GM12878 (cell line): ENCODE measurements at regions of chr16 and their contacts with region 1.

Region 1: GRCh38 chr16:19086322-19087199 is 19.1 kb downstream of the COQ7 start:
- DNase-seq: peak; percentile 20
- ATAC-seq: peak; percentile 100
- H3K4me3 ChIP-seq: peak overlapping the region; percentile 64; the same call in 1 of the 2 replicates
- H3K27ac ChIP-seq: no peak overlapping the region
- H3K4me1 ChIP-seq: peaks cover 3% of the 10 kb centered on the region; the same call in 1 of the 2 replicates
- H3K27me3 ChIP-seq: no peaks in the 10 kb centered on the region
- CTCF ChIP-seq: peak; percentile 95 to 96 (median 95)
- EP300 ChIP-seq: no peak
- POLR2A ChIP-seq: peak; percentile 43; the same call in 1 of the 2 replicates
- RAD21 ChIP-seq: peak; percentile 97

Region 2: DNA sequence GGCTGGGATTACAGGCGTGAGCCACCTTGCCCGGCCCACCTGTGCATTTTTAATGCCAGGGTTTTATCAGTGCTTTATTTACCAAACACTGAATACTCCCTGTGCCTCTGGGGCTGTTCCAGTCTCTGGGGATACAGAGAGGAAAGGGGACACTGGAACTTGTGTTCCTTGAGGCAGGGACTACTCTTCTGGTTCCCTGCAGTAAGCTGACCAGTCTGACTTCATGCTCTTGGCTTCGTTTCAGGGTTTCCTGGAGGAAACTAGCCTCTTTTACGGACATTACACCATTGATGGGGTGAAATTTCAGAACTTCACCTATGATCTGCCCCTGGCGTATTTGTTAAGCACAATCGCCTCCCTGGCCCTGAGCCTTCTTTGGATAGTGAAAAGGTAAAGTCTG is 56.6 kb before region 1 on chr16:
- CTCF ChIA-PET with region 1: no interaction called
- POLR2A ChIA-PET with region 1: no interaction called
- RAD21 ChIA-PET with region 1: no interaction called
- SMC1A ChIA-PET with region 1: no interaction called
- in situ Hi-C with region 1: no loop called
- intact Hi-C with region 1: no loop called
- DNase-seq: no peak
- ATAC-seq: no peak
- H3K4me3 ChIP-seq: no peak overlapping the region
- H3K27ac ChIP-seq: no peak overlapping the region
- H3K4me1 ChIP-seq: no peaks in the 10 kb centered on the region
- H3K27me3 ChIP-seq: no peaks in the 10 kb centered on the region
- CTCF ChIP-seq: no peak
- EP300 ChIP-seq: no peak
- POLR2A ChIP-seq: no peak
- RAD21 ChIP-seq: no peak

Region 3: DNA sequence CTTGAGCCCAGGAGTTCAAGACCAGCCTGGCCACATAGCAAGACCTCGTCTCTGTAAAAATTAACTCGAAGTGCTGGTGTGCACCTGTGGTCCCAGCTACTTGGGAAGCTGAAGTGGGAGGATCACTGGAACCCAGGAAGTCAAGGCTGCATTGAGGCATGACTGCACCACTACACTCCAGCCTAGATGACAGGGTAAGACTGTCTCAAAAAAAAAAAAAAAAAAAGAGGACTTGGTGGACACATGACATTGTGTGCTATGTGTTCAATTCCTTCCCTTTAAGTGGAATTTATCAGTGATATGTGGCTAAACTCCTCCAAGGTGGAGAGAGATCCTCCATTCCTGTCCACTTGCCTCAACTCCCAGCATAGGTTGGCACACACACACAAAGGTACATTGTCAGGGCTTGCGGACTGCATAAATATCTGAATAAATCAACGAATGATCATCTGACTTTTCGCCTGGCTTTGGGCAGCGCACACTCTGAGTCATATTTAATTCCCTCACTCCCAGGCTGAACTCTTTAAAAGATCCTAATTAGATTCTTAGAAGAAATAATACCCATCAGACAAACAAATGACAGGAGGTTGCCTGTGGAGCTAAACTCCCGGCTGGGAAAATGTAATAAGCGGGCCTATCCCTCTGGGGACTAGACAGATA is 56.5 kb after region 1 on chr16:
- CTCF ChIA-PET with region 1: interaction called, 13 read pairs
- POLR2A ChIA-PET with region 1: interaction called, 5 read pairs
- RAD21 ChIA-PET with region 1: interaction called, 3 read pairs
- SMC1A ChIA-PET with region 1: interaction called, 3 read pairs
- in situ Hi-C with region 1: no loop called
- intact Hi-C with region 1: no loop called
- DNase-seq: no peak
- ATAC-seq: no peak
- H3K4me3 ChIP-seq: no peak overlapping the region
- H3K27ac ChIP-seq: no peak overlapping the region
- H3K4me1 ChIP-seq: no peaks in the 10 kb centered on the region
- H3K27me3 ChIP-seq: 0 out of 4 replicates have a peak, but pooled peaks cover 0 to 2% of the 10 kb centered on the region in 2 experiments
- CTCF ChIP-seq: no peak
- EP300 ChIP-seq: no peak
- POLR2A ChIP-seq: no peak
- RAD21 ChIP-seq: no peak

Region 4: DNA sequence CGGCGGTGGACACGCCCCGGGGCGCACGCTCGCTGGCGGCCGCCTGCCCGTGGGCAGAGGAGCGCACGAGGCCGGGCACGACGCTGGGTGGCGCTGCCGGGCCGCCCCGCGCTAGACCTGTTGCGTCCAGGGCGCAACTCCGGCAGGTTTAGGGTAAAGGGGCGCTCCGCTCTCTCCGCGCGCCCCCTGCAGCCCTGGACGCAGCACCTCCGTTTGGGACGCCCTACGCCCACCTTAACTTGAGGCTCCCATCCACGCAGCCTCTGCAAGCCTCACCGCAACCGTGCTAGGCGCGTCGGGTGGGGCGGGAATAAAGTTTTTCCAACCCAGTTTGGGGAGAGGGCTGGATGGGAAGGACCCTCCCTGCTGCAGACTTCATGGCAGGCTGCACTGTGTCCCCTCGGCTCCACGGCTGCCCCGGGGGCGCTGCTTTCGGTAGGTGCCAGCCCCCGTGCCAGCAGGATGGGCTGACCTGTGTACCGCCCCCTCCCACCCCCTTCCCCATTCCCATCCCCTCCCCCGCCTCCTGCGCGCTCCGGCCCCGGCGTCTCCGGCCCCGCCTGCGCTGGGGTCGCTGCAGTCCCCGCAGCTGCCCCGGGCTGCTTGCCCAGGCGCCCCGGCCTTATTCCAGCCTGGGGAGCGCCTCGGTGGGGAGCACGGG is 81.3 kb after region 1 on chr16 and contains the start of gene SYT17:
- CTCF ChIA-PET with region 1: interaction called, 8 read pairs
- POLR2A ChIA-PET with region 1: no interaction called
- RAD21 ChIA-PET with region 1: interaction called, 5 read pairs
- SMC1A ChIA-PET with region 1: interaction called, 7 read pairs
- in situ Hi-C with region 1: loop called (anchors 5 kb)
- intact Hi-C with region 1: loop called (anchors 1 kb)
- DNase-seq: no peak
- ATAC-seq: peak; percentile 98
- H3K4me3 ChIP-seq: peak within 1 kb of the TSS; percentile 21; the same call in 1 of the 2 replicates
- H3K27ac ChIP-seq: no peak within 1 kb of the TSS
- H3K4me1 ChIP-seq: no peaks in the 10 kb centered on the region
- H3K27me3 ChIP-seq: no peaks in the 10 kb centered on the region; a peak in 1 of 4 replicates
- CTCF ChIP-seq: peak; percentile 68 to 83 (median 78)
- EP300 ChIP-seq: no peak
- POLR2A ChIP-seq: no peak
- RAD21 ChIP-seq: peak; percentile 75
- polyA plus RNA-seq, gene SYT17: 10.2 to 12.3 TPM

Region 5: GRCh38 chr16:19179546-19180490 is 93.3 kb after region 1 on chr16:
- CTCF ChIA-PET with region 1: interaction called, 80 read pairs
- POLR2A ChIA-PET with region 1: no interaction called
- RAD21 ChIA-PET with region 1: interaction called, 35 read pairs
- SMC1A ChIA-PET with region 1: interaction called, 59 read pairs
- in situ Hi-C with region 1: no loop called
- intact Hi-C with region 1: loop called (anchors 1 kb)
- DNase-seq: no peak
- ATAC-seq: peak; percentile 94
- H3K4me3 ChIP-seq: no peak overlapping the region
- H3K27ac ChIP-seq: no peak overlapping the region
- H3K4me1 ChIP-seq: no peaks in the 10 kb centered on the region
- H3K27me3 ChIP-seq: no peaks in the 10 kb centered on the region
- CTCF ChIP-seq: peak; percentile 61 to 75 (median 68)
- EP300 ChIP-seq: no peak
- POLR2A ChIP-seq: no peak
- RAD21 ChIP-seq: peak; percentile 55

Region 6: GRCh38 chr16:19375561-19376158 is 289.1 kb after region 1 on chr16:
- CTCF ChIA-PET with region 1: interaction called, 27 read pairs
- POLR2A ChIA-PET with region 1: no interaction called
- RAD21 ChIA-PET with region 1: interaction called, 5 read pairs
- SMC1A ChIA-PET with region 1: interaction called, 9 read pairs
- in situ Hi-C with region 1: loop called (anchors 5 kb)
- intact Hi-C with region 1: loop called (anchors 1 kb)
- DNase-seq: peak; percentile 28
- ATAC-seq: peak; percentile 80
- H3K4me3 ChIP-seq: no peak overlapping the region
- H3K27ac ChIP-seq: no peak overlapping the region
- H3K4me1 ChIP-seq: peaks cover 3% of the 10 kb centered on the region; the same call in 1 of the 2 replicates
- H3K27me3 ChIP-seq: no peaks in the 10 kb centered on the region
- CTCF ChIP-seq: peak; percentile 77 to 91 (median 81)
- EP300 ChIP-seq: no peak
- POLR2A ChIP-seq: no peak
- RAD21 ChIP-seq: peak; percentile 99